ENCODE measurements at regions of chr3 and their contacts with region 1.

Region 1: GRCh38 chr3:158717576-158717975 is 14.7 kb downstream of the RARRES1 start:
- DNase-seq: no peak
- H3K4me3 ChIP-seq: no peak overlapping the region
- H3K27me3 ChIP-seq: no peaks in the 10 kb centered on the region
- CTCF ChIP-seq: no peak

Region 2: DNA sequence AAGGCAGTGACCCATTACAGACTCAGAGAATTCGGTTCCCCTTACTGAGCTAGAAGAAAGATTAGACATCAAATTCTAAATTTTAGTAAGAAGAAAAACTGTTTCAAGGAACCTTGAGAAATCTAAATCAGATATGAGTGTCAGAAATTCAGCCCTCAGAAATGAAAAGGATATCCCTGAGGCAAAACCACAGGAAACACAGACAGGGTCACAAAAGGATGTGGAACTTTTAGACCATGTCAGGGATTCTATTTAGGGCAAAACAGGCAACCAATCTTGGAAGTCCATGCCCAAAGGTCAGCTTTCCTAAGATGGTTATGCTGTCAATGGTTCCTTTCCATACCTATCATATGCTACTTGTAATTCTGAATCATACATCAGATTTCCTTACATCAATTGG is 643.0 kb before region 1 on chr3:
- CTCF ChIA-PET with region 1: no interaction called
- POLR2A ChIA-PET with region 1: no interaction called
- DNase-seq: no peak
- H3K4me3 ChIP-seq: no peak overlapping the region
- H3K27me3 ChIP-seq: no peaks in the 10 kb centered on the region
- CTCF ChIP-seq: no peak

Region 3: DNA sequence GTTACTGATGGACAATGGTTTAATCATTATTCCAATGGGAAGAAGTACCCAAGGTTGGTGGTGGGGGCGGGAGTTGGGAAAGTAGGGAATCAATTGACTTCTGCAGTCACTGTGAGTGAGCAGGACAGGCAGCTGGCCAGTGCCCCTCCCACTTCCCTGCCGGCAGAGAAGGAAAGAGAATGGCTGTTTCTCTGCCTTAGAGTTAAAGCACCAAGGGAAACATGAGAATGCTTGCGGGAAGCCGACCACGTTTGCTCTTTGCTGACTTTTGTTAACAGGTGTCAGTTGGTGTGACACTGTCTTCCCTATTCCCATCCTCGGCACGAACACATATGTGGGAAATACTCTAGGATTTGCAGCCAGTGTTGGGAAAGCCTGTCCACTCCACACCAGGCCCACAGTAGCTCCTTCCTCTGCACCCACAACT is 50.8 kb after region 1 on chr3:
- CTCF ChIA-PET with region 1: no interaction called
- POLR2A ChIA-PET with region 1: interaction called, 16 read pairs
- DNase-seq: no peak
- H3K4me3 ChIP-seq: no peak overlapping the region
- H3K27me3 ChIP-seq: no peaks in the 10 kb centered on the region
- CTCF ChIP-seq: no peak

Measured in BJ (cell line).